Activated CD4-positive, alpha-beta T cell treated with anti-CD3 and anti-CD28 coated beads, Interleukin-2, amount 10 ng/mL, durations not matched to agents 24 days and 14 days (primary cell): ENCODE measurements at regions of chr1 and their contacts with region 1.

Region 1: DNA sequence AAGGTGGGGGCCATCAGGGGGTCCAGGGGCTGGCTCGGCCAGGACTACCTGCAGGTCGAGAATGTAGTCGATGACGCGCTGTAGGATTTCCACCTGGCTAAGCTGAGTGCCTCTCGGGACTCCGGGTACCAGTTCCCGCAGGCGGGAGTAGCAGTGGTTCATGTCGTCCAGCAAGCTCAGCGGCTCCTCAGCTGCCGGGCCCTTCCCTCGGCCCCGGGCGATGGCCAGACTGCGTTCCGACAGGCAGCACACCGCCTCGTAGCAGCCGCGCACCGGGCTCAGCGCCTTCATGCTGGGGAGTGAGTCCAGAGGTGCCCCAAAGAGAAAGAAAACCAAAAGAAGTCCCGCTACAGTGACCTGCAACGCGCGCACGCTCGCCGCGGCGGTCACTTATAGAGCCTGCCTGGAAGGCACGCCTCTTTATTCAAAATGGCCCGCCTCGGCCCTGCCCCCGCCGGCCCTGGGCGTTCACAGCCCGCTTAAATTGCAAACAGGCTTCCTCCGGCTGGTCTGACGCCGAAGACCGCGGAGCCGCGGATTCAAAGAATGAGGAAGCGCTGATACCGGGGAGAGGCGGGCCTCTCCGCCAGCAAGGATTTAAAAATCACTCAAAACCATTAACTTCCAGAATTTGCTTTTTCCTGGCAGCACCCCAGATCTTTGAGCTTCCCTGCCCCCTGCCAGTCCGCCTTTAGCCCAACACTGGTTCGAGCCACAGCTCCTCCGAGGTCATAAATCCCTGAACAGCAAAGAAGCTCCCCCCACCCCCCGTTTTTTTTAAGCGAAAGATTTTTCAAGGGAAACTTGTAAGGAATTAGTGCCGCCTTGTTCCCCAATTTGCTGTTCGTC is at the start of gene ID3:
- DNase-seq: peak; percentile 99
- H3K4me3 Mint-ChIP-seq: peak within 1 kb of the TSS; percentile 93
- H3K27ac Mint-ChIP-seq: peak within 1 kb of the TSS; percentile 86
- H3K4me1 Mint-ChIP-seq: peaks cover 57% of the 10 kb centered on the region
- H3K27me3 Mint-ChIP-seq: peaks cover 31% of the 10 kb centered on the region
- total RNA-seq, gene ID3: 21.2 and 23.5 TPM in 2 replicates

Region 2: DNA sequence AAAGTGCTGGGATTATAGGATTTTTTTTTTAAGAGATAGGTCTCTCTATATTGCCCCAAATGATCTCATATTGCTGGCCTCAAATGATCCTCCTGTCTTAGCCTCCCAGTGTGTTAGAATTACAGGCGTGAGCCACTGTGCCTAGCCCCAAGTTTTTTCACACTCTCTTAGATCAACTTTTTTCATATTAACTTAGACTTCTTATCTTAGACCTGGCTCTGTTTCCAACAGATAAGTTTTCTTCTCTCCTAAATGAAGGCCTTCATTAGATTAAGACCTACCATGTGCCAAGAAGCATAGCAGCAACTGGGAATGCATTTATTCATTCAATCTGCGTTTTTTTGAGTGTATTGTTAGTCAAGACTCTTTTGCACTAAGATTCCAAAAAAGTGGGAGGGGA is 321.9 kb before region 1 on chr1:
- intact Hi-C with region 1: no loop called
- DNase-seq: no peak
- H3K4me3 Mint-ChIP-seq: no peak overlapping the region
- H3K27ac Mint-ChIP-seq: no peak overlapping the region
- H3K4me1 Mint-ChIP-seq: no peaks in the 10 kb centered on the region
- H3K27me3 Mint-ChIP-seq: peaks cover 4% of the 10 kb centered on the region

Region 3: DNA sequence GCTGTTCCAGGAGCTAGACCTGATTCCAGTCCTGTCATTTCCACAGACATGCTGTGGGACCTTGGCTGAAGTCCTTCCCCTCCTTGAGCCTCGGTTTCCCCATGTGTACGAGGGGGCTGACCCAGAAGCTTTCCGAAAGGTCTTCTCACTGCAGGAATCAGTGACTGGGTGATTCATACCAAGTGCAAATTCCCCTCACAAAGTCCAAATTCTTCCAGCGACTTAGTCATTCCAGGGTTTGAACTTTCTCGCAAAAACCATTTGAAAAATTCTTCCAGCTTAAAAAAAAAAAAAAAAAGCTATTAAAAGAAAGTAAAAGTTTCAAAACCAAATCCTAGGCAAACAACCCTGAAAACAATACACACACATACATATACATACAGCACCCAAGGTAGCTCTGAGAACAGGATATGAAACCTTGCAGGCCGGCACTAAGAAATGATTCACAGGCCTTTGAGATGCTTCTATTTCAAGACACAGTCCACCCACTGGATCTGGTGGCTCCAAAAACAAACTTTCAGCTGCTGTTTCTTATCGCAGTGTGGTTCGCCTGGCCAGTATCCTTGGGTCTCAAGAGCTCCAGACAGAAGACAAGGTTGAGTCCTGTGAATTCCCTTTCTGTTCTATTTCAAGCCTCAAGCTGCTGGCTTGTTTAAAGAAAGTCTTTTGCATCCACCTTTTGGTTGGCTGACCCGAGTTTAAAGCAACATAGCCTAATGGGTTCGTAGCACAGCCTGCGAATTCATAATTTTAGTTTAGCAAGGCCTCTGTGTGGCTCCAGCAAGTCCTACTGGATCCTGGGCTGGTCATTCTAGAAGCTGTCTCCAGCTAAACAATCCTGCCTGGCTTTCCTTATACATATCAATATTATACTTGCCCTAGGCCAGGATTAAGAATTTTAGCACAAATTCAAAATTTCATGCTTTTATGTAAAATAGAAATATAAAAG is 18.0 kb after region 1 on chr1:
- intact Hi-C with region 1: loop called (anchors 1 kb)
- DNase-seq: peak; percentile 84
- H3K4me3 Mint-ChIP-seq: peak overlapping the region; percentile 62
- H3K27ac Mint-ChIP-seq: peak overlapping the region; percentile 80
- H3K4me1 Mint-ChIP-seq: peaks cover 23% of the 10 kb centered on the region
- H3K27me3 Mint-ChIP-seq: no peaks in the 10 kb centered on the region

Region 4: GRCh38 chr1:23591460-23592208 is 32.3 kb after region 1 on chr1:
- intact Hi-C with region 1: loop called (anchors 2 kb)
- DNase-seq: peak; percentile 74
- H3K4me3 Mint-ChIP-seq: peak overlapping the region; percentile 72
- H3K27ac Mint-ChIP-seq: peak overlapping the region; percentile 90
- H3K4me1 Mint-ChIP-seq: peaks cover 58% of the 10 kb centered on the region
- H3K27me3 Mint-ChIP-seq: no peaks in the 10 kb centered on the region

Region 5: GRCh38 chr1:23601968-23602876 is 42.9 kb after region 1 on chr1:
- intact Hi-C with region 1: no loop called
- DNase-seq: peak; percentile 78
- H3K4me3 Mint-ChIP-seq: peak overlapping the region; percentile 51
- H3K27ac Mint-ChIP-seq: peak overlapping the region; percentile 72
- H3K4me1 Mint-ChIP-seq: peaks cover 53% of the 10 kb centered on the region
- H3K27me3 Mint-ChIP-seq: no peaks in the 10 kb centered on the region

Region 6: GRCh38 chr1:23619299-23620188 is 60.2 kb after region 1 on chr1:
- intact Hi-C with region 1: loop called (anchors 1 kb)
- DNase-seq: peak; percentile 90
- H3K4me3 Mint-ChIP-seq: peak overlapping the region; percentile 82
- H3K27ac Mint-ChIP-seq: peak overlapping the region; percentile 66
- H3K4me1 Mint-ChIP-seq: peaks cover 64% of the 10 kb centered on the region
- H3K27me3 Mint-ChIP-seq: no peaks in the 10 kb centered on the region

Region 7: DNA sequence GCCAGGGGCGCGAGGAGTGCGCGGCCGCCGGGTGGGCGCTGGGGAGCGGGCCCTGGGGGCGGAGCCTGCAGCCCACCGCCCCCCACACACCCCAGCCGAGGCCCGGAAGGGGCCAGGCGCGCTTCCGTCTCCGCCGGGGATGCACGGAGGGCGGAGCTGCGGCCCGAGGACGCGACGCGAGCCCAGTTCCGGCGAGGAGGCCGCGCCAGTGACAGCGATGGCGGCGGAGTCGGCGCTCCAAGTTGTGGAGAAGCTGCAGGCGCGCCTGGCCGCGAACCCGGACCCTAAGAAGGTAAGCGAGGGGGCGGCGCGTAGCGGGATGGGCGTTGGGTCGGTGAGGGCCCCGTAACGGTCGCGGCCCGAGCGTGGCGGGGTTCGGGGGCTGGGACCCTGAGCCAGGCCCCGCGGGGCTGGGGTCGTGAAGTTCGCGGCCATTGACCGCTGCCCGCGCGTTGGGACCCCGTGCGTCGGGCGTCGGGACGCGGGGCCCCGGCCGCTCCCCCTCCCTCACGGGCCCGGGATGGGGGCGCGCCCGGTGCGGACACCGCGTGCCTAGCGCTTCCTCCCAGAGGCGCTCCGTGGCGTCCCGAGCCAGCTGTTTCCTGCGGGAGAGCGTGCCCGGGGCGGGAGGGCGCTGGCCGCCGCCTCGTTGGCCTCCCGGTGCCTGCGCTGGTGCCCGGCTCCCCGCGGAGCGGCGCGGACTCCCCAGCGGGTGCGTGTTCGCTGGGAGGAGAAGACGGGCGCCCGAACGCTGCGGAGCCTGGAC is 184.1 kb after region 1 on chr1 and contains the start of gene ELOA:
- intact Hi-C with region 1: loop called (anchors 10 kb)
- DNase-seq: peak; percentile 95
- H3K4me3 Mint-ChIP-seq: peak within 1 kb of the TSS; percentile 91
- H3K27ac Mint-ChIP-seq: peak within 1 kb of the TSS; percentile 90
- H3K4me1 Mint-ChIP-seq: peaks cover 40% of the 10 kb centered on the region
- H3K27me3 Mint-ChIP-seq: no peaks in the 10 kb centered on the region
- total RNA-seq, gene ELOA: 51.9 and 54.3 TPM in 2 replicates